ENCODE measurements at regions of chr3 and their contacts with region 1.

Region 1: GRCh38 chr3:149808209-149808829 is 4.7 kb upstream of the RNF13 start:
- DNase-seq: peak; percentile 84
- ATAC-seq: peak; percentile 51
- H3K4me3 ChIP-seq: no peak overlapping the region
- H3K27ac ChIP-seq: no peak overlapping the region
- H3K4me1 ChIP-seq: no peaks in the 10 kb centered on the region
- H3K27me3 ChIP-seq: no peaks in the 10 kb centered on the region
- CTCF ChIP-seq: peak; percentile 90
- POLR2A ChIP-seq: no peak
- RAD21 ChIP-seq: peak; percentile 85

Region 2: GRCh38 chr3:147875498-147875897 is 1932.8 kb before region 1 on chr3:
- CTCF ChIA-PET with region 1: no interaction called
- POLR2A ChIA-PET with region 1: no interaction called
- dilution Hi-C with region 1: no loop called
- in situ Hi-C with region 1: no loop called
- intact Hi-C with region 1: no loop called
- DNase-seq: no peak
- ATAC-seq: no peak
- H3K4me3 ChIP-seq: no peak overlapping the region
- H3K27ac ChIP-seq: no peak overlapping the region
- H3K4me1 ChIP-seq: no peaks in the 10 kb centered on the region
- H3K27me3 ChIP-seq: no peaks in the 10 kb centered on the region; the same call in 1 of the 2 replicates
- CTCF ChIP-seq: no peak
- POLR2A ChIP-seq: no peak
- RAD21 ChIP-seq: no peak

Region 3: GRCh38 chr3:149494022-149494758 is 314.1 kb before region 1 on chr3:
- CTCF ChIA-PET with region 1: no interaction called
- POLR2A ChIA-PET with region 1: no interaction called
- dilution Hi-C with region 1: no loop called
- in situ Hi-C with region 1: no loop called
- intact Hi-C with region 1: loop called (anchors 1 kb)
- DNase-seq: peak; percentile 76
- ATAC-seq: peak; percentile 88
- H3K4me3 ChIP-seq: no peak overlapping the region
- H3K27ac ChIP-seq: no peak overlapping the region
- H3K4me1 ChIP-seq: peaks cover 9% of the 10 kb centered on the region
- H3K27me3 ChIP-seq: no peaks in the 10 kb centered on the region
- CTCF ChIP-seq: peak; percentile 89
- POLR2A ChIP-seq: no peak
- RAD21 ChIP-seq: peak; percentile 90

Region 4: DNA sequence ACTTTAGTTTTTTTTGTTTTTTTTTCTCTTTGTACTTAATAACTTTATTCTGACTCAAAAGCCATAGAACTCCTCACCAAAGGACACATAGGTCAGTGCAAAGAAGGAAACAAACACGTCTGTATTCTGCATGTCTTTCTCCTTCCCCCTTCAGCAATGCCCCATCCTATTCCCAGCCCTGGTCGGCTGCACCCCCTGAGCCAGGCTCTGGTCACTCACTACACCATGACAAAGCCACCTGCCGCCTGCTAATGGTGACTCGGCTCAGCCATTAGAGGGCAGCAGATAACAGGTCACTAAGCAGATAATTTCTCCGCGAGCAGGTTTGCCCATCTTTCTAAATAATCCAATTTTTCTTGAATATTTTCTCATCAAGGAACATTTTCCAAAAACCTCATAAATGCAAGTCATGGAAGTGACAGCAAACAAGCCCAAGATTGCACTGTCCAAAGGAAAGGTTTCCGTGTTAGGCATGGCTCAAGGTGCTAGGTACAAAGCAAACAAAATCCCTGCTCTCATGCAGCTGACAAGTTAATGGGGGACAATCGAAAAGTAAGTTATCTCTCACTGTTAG is 296.0 kb before region 1 on chr3:
- CTCF ChIA-PET with region 1: no interaction called
- POLR2A ChIA-PET with region 1: no interaction called
- dilution Hi-C with region 1: no loop called
- in situ Hi-C with region 1: no loop called
- intact Hi-C with region 1: loop called (anchors 1 kb)
- DNase-seq: peak; percentile 72
- ATAC-seq: peak; percentile 80
- H3K4me3 ChIP-seq: no peak overlapping the region
- H3K27ac ChIP-seq: no peak overlapping the region
- H3K4me1 ChIP-seq: peaks cover 8% of the 10 kb centered on the region
- H3K27me3 ChIP-seq: no peaks in the 10 kb centered on the region
- CTCF ChIP-seq: peak; percentile 88
- POLR2A ChIP-seq: no peak
- RAD21 ChIP-seq: peak; percentile 84

Region 5: DNA sequence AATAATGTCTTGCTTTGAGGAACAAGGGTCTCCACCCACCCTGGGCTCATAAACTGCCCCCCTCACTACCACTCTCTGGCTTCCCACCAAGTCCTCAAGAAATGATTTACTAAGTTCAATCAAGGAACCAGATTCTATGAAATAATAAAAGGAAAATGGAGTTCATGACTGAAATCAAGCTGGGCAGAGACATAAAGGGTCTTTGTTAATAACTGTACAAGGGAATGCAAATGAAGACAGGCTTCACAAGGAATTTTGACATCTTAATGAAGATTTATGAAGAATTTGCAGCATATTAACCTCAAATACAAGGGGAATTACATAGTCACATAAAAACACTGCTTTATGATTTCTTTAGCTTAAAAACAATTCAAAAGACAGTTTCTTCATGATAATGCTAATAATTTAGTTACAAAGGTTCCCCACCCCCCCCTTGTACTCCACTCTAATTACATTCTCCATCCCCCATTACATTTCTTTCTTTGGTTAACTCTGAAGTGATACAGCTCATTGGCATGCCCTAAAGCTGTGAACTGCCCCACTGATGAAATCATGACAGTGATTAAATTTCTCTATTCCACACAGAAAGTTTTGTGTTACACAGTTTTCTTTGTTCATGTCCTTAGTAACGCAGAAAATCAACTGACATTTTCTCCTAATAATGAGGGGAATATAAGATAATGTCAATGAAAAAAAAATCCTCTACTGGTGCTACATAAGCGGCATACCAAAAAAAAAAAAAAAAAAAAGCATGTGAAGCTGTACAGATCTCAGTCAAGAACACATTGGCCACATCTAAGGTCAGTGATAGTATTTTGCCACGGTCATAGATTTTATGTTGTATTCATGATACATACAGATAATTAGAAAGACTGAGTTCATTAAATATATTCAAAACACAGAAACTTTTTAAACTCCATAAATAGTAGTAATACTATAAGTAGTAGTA is 204.9 kb before region 1 on chr3:
- CTCF ChIA-PET with region 1: no interaction called
- POLR2A ChIA-PET with region 1: no interaction called
- dilution Hi-C with region 1: no loop called
- in situ Hi-C with region 1: no loop called
- intact Hi-C with region 1: no loop called
- DNase-seq: peak; percentile 82
- ATAC-seq: peak; percentile 77
- H3K4me3 ChIP-seq: no peak overlapping the region
- H3K27ac ChIP-seq: peak overlapping the region; percentile 30; the same call in 1 of the 2 replicates
- H3K4me1 ChIP-seq: peaks cover 27% of the 10 kb centered on the region
- H3K27me3 ChIP-seq: no peaks in the 10 kb centered on the region
- CTCF ChIP-seq: no peak
- POLR2A ChIP-seq: no peak
- RAD21 ChIP-seq: no peak

Region 6: GRCh38 chr3:149765762-149766334 is 42.5 kb before region 1 on chr3:
- CTCF ChIA-PET with region 1: interaction called, 58 read pairs
- POLR2A ChIA-PET with region 1: interaction called, 3 read pairs
- dilution Hi-C with region 1: no loop called
- in situ Hi-C with region 1: no loop called
- intact Hi-C with region 1: loop called (anchors 1 kb)
- DNase-seq: peak; percentile 67
- ATAC-seq: peak; percentile 80
- H3K4me3 ChIP-seq: no peak overlapping the region
- H3K27ac ChIP-seq: no peak overlapping the region
- H3K4me1 ChIP-seq: no peaks in the 10 kb centered on the region
- H3K27me3 ChIP-seq: peaks cover 39% of the 10 kb centered on the region
- CTCF ChIP-seq: peak; percentile 74
- POLR2A ChIP-seq: no peak
- RAD21 ChIP-seq: peak; percentile 67

Region 7: DNA sequence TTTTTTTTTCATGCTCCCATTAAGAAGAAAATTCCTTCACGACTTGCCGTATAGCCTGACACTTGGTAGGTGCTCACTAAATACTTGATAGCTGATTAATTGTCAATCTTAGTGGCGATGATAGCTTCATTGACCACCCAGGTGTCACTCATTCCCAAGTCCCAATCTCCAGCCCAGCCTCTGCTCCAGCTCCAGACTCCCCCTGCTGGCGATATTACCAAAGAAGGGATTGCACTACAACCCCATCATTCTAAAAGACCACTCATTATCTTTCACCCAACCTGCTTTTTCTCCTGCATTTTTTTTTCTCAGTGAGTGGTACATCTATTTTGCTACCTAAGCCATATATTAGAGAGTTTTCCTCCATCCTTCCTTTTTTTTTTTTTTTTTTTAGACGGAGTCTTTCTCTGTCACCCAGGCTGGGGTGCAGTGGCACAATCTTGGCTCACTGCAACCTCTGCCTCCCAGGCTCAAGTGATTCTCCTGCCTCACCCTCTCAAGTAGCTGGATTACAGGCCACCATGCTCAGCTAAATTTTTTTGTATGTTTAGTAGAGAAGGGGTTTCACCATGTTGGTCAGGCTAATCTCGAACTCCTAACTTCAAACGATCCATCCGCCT is 36.6 kb before region 1 on chr3:
- CTCF ChIA-PET with region 1: interaction called, 58 read pairs
- POLR2A ChIA-PET with region 1: no interaction called
- dilution Hi-C with region 1: no loop called
- in situ Hi-C with region 1: no loop called
- intact Hi-C with region 1: no loop called
- DNase-seq: peak; percentile 25
- ATAC-seq: peak; percentile 70; the same call in 1 of the 2 replicates
- H3K4me3 ChIP-seq: no peak overlapping the region
- H3K27ac ChIP-seq: no peak overlapping the region
- H3K4me1 ChIP-seq: no peaks in the 10 kb centered on the region
- H3K27me3 ChIP-seq: peaks cover 13% of the 10 kb centered on the region
- CTCF ChIP-seq: peak; percentile 67
- POLR2A ChIP-seq: no peak
- RAD21 ChIP-seq: peak; percentile 67

Region 8: DNA sequence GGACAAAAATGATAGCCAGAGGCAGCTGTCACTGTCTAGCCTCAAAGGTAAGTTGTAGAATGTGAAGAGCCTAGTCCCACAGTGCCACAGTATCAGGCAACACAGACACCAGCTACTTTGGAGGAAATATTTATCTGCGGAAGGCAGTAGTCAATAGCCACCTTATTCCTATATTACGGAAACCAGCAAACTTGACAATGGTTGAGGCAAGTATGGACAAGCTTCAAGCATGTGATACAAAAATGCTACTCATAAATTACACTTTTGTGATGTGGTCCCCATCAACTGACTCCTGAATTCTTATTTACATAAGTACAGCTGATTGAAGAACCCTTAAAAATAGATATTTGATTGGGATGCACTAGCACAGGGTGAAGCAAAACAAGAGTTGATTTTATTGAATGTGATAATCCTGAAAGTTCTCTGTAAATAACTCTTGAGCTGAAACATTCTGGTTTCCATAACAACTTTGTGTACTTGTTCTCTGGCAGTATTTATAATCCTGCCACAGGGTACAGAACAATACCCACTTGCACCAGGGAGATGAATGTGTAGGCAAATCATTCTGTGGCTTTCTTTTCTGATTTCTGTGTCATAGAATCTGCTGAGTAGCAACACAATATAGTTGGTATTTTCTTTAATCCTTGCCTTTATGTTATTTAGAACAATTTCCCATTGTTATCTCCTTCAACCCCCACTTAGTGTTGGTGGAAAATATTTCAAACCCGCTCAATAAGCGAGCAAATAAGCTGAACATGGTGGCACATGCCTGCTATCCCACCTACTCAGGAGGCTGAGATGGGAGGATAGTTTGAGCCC is 15.7 kb before region 1 on chr3 and contains the start of gene ANKUB1:
- CTCF ChIA-PET with region 1: interaction called, 12 read pairs
- POLR2A ChIA-PET with region 1: no interaction called
- dilution Hi-C with region 1: no loop called
- in situ Hi-C with region 1: no loop called
- intact Hi-C with region 1: no loop called
- DNase-seq: no peak
- ATAC-seq: no peak
- H3K4me3 ChIP-seq: no peak within 1 kb of the TSS
- H3K27ac ChIP-seq: no peak within 1 kb of the TSS
- H3K4me1 ChIP-seq: peaks cover 3% of the 10 kb centered on the region; the same call in 1 of the 2 replicates
- H3K27me3 ChIP-seq: no peaks in the 10 kb centered on the region
- CTCF ChIP-seq: no peak
- POLR2A ChIP-seq: no peak
- RAD21 ChIP-seq: no peak
- total RNA-seq, gene ANKUB1: not detected in 2 replicates

Measured in IMR-90 (cell line).